ENCODE measurements at regions of chr16 and their contacts with region 1.

Region 1: GRCh38 chr16:22321339-22322001 is 24.3 kb downstream of the POLR3E start:
- DNase-seq: peak in 1 of 2 donors; percentile 80
- ATAC-seq: peak; percentile 56 to 78
- H3K4me3 ChIP-seq: no peak overlapping the region
- H3K27ac ChIP-seq: peak overlapping the region in 2 of 4 donors; percentile 59 to 64
- H3K4me1 ChIP-seq: peaks cover 6 to 20% of the 10 kb centered on the region in 2 donors
- H3K27me3 ChIP-seq: no peaks in the 10 kb centered on the region
- CTCF ChIP-seq: peak; percentile 74 to 93 (median 89)
- POLR2A ChIP-seq: no peak

Region 2: DNA sequence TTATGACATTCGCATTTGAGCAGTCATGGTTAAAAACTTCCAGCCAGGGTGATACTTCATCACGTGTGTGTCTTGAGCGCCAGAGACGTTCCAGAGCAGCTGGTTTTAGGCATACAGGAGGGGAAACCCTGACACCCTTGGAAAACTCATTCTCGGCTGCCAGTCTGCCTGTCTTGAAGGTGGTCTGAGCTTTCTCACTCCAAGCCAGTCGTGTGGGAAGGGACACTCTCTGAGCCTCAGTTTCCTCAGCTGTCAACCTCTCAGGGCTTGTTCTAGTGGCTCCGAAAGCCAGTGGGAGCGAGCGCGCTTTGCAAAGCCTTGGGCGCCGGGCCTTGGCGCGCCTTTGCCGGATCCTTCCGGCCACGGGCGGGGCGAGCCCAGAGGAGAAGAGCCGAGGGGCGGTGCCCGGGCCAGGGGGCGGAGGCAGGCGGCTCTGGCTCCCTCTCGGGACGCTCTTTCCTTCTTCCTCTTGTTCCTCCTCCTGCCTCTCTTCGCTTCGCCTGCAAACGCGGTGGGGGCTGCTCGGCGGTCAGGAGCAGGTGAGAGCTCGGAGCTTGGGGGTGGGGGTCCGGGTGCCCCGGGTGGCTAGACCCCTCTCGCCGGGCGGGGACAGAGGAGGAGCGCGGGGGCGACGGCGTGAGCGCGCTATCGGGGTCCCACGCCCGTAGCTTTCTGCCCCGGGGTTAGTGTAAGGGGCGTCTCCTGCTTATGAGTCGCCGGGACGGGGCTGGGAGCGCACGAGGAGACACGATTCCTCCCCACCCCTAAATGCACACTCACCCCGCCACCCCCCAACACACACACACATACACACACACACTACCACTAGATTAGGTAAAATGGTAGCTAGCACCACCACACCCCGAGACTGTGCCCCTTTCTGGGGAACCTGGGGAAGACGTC is 1163.0 kb before region 1 on chr16 and contains the start of gene LDAF1:
- in situ Hi-C with region 1: loop called in 1 of 4 experiments (anchors 10 kb)
- intact Hi-C with region 1: no loop called
- DNase-seq: peak; percentile 64 to 75
- ATAC-seq: peak; percentile 82
- H3K4me3 ChIP-seq: peak within 1 kb of the TSS; percentile 77 to 96 (median 86)
- H3K27ac ChIP-seq: peak within 1 kb of the TSS; percentile 81 to 95 (median 92)
- H3K4me1 ChIP-seq: peaks cover 35 to 59% of the 10 kb centered on the region in 2 donors
- H3K27me3 ChIP-seq: no peaks in the 10 kb centered on the region
- CTCF ChIP-seq: no peak
- POLR2A ChIP-seq: peak; percentile 52 to 67
- total RNA-seq, gene LDAF1: 19.4 to 70.0 (median 34.3) TPM

Region 3: GRCh38 chr16:21184834-21185233 is 1136.6 kb before region 1 on chr16:
- in situ Hi-C with region 1: loop called in 1 of 4 experiments (anchors 25 kb)
- intact Hi-C with region 1: loop called (anchors 5 kb)
- DNase-seq: no peak
- ATAC-seq: no peak
- H3K4me3 ChIP-seq: no peak overlapping the region
- H3K27ac ChIP-seq: no peak overlapping the region
- H3K4me1 ChIP-seq: no peaks in the 10 kb centered on the region
- H3K27me3 ChIP-seq: no peaks in the 10 kb centered on the region
- CTCF ChIP-seq: no peak
- POLR2A ChIP-seq: no peak

Region 4: DNA sequence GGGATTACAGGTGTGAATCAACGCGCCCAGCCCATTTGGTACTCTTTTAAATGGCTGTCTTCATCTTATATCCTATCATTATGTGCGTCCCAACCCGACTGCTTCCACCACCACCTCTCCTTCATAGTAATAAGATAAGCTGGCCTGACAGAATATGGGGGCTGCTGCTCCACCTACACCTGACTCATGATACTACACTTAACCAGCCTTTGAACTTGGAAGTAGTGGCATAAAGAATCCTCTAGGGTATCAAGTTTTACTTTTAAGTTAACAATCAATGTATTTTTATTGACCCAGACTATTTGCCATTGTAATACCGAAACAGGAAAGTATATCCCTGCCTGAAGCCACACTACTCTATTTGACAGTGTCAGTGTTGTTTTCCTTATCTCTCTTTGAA is 339.4 kb before region 1 on chr16:
- in situ Hi-C with region 1: no loop called
- intact Hi-C with region 1: no loop called
- DNase-seq: no peak
- ATAC-seq: no peak
- H3K4me3 ChIP-seq: no peak overlapping the region
- H3K27ac ChIP-seq: no peak overlapping the region
- H3K4me1 ChIP-seq: peaks cover 0 to 13% of the 10 kb centered on the region in 2 donors
- H3K27me3 ChIP-seq: no peaks in the 10 kb centered on the region
- CTCF ChIP-seq: no peak
- POLR2A ChIP-seq: no peak

Region 5: DNA sequence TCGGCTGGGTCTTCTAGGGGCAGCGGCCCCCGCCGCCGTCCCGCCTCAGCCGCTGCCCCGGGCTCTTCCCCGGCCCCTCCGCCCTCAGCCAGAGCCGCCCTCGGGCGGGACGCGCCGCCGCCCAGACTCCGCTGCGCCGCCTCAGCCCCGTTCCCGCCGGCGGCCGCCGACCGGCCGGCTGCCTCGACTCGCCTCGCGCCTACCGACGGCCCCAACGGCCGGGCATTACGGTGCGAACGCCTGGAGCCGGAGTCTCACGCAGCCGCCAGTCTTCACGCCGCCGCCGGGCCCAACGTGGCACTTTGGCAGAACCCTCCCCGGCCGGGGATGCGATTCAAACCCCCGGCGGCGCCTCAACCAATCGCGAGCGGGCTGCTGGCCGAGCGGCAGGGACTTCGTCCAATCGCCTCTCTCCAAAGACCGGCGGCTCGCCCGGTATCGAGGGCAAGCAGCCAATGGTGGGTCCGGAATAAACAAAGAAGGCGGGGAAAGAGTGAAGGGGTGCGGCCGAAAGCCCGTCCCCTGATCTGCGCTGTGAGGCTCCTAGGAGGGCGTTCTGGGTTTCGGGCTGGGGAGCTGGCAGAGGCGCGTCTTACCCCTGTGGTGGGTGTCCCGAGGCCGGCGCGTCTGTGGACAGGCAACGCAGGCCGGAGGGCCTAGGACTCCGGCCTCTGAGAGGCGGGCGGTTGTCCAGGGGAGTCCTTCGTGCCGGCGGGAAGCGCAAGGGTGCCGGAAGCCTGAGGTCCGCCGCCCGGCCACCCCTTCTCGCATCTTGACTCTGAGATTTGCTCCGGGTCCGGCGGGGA is 53.0 kb after region 1 on chr16 and contains the start of gene CDR2:
- in situ Hi-C with region 1: no loop called
- intact Hi-C with region 1: loop called (anchors 5 kb)
- DNase-seq: peak; percentile 97
- ATAC-seq: peak; percentile 97
- H3K4me3 ChIP-seq: peak within 1 kb of the TSS; percentile 71 to 87 (median 78)
- H3K27ac ChIP-seq: peak within 1 kb of the TSS; percentile 63 to 76 (median 70)
- H3K4me1 ChIP-seq: peaks cover 21 to 25% of the 10 kb centered on the region in 2 donors
- H3K27me3 ChIP-seq: no peaks in the 10 kb centered on the region
- CTCF ChIP-seq: no peak
- POLR2A ChIP-seq: peak; percentile 70 to 88
- total RNA-seq, gene CDR2: 4.1 to 7.6 (median 7.3) TPM

Region 6: GRCh38 chr16:22424161-22424937 is 102.9 kb after region 1 on chr16:
- in situ Hi-C with region 1: no loop called
- intact Hi-C with region 1: loop called (anchors 5 kb)
- DNase-seq: peak; percentile 67 to 90
- ATAC-seq: peak; percentile 91 to 92
- H3K4me3 ChIP-seq: peak overlapping the region; percentile 38 to 64 (median 49)
- H3K27ac ChIP-seq: peak overlapping the region; percentile 80 to 94 (median 88)
- H3K4me1 ChIP-seq: peaks cover 17 to 19% of the 10 kb centered on the region in 2 donors
- H3K27me3 ChIP-seq: no peaks in the 10 kb centered on the region
- CTCF ChIP-seq: no peak
- POLR2A ChIP-seq: no peak